Activated CD8-positive, alpha-beta T cell treated with anti-CD3 and anti-CD28 coated beads for 36 hours (primary cell): ENCODE measurements at regions of chr5 and their contacts with region 1.

Region 1: DNA sequence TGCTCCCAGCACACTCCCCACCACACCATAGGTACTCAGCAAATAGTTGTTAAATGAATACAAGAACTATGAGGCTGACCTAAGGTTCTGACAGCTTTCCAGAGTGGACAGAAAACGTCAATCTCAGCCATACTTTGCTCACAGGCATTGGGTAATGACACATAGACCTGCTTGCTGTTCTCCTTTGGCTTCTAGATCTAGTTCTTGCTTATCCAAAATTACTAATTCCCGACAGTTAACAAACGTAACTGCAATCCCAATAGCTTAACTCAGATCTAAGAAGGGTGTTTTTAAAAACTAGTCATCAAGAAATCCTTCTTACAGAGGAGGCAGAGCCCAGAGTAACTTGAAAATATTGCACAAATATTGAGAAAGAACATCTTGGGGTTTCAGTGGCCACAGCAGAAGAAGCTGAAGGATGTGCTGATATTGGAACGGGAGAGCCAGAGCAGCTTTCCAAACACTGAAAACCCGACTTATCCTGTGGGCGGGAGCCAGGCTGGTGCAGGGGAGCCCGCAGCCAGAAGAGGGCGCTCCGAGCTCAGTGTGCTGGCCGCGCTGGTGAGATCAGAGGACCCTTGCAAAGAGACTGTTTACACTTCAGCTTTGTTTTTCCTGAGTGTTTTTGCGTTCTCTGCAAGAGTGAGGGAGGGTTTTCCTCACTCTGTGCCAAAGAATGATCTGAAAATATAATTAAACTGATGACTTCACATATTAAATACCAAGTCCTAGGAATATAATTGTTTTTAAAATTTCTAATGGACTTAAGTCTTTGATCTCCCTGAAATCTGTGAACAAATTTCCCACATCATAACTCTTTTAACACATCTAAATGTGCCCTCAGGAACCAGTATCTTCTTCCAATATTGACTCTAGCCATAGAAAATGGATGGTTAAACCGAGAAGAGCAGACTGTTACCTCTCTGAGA is 30.3 kb downstream of the FGF1 start:
- DNase-seq: peak; percentile 81
- ATAC-seq: peak; percentile 93
- H3K4me3 Mint-ChIP-seq: no peak overlapping the region
- H3K27ac Mint-ChIP-seq: no peak overlapping the region
- H3K4me1 Mint-ChIP-seq: no peaks in the 10 kb centered on the region
- H3K27me3 Mint-ChIP-seq: peaks cover 12% of the 10 kb centered on the region
- CTCF ChIP-seq: peak; percentile 97

Region 2: GRCh38 chr5:142342128-142342981 is 313.2 kb before region 1 on chr5:
- CTCF ChIA-PET with region 1: no interaction called
- POLR2A ChIA-PET with region 1: no interaction called
- intact Hi-C with region 1: no loop called
- DNase-seq: no peak
- ATAC-seq: no peak
- H3K4me3 Mint-ChIP-seq: no peak overlapping the region
- H3K27ac Mint-ChIP-seq: no peak overlapping the region
- H3K4me1 Mint-ChIP-seq: no peaks in the 10 kb centered on the region
- H3K27me3 Mint-ChIP-seq: peaks cover 3% of the 10 kb centered on the region
- CTCF ChIP-seq: no peak

Region 3: DNA sequence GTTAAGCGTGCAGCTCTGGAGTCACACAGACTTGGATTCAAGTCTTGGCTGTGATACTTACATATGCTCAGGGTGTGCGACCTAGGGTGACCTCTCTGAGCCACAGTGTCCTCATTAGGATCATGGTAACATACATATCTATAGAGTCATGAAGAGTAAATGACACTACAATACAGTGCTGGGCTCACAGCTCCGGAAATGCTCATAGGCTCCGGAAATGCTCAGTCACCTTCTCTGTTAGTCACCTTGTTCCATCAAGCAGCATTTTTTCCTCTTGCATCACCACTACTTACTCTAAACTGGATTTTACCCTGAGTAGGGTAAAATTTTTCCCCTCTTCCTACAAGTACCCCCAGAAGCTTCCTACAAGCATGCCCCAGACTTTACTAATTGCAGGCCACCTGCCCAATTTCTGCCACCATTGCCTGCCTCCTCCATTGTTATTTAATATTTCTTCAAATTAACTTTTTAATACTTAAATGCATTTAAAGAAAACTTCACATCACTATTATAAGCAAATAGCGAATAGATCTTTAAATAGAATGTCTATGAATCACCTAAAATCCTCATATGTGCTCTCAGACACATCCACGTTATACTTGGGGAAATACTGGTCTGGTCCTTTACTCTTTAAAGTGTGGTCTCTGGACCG is 183.2 kb before region 1 on chr5:
- CTCF ChIA-PET with region 1: no interaction called
- POLR2A ChIA-PET with region 1: no interaction called
- intact Hi-C with region 1: no loop called
- DNase-seq: peak; percentile 74
- ATAC-seq: peak; percentile 100
- H3K4me3 Mint-ChIP-seq: no peak overlapping the region
- H3K27ac Mint-ChIP-seq: peak overlapping the region; percentile 79
- H3K4me1 Mint-ChIP-seq: peaks cover 14% of the 10 kb centered on the region
- H3K27me3 Mint-ChIP-seq: no peaks in the 10 kb centered on the region
- CTCF ChIP-seq: no peak

Region 4: GRCh38 chr5:142611154-142611553 is 44.4 kb before region 1 on chr5:
- CTCF ChIA-PET with region 1: interaction called, 36 read pairs
- POLR2A ChIA-PET with region 1: no interaction called
- intact Hi-C with region 1: no loop called
- DNase-seq: peak; percentile 87
- ATAC-seq: peak; percentile 98
- H3K4me3 Mint-ChIP-seq: no peak overlapping the region
- H3K27ac Mint-ChIP-seq: no peak overlapping the region
- H3K4me1 Mint-ChIP-seq: no peaks in the 10 kb centered on the region
- H3K27me3 Mint-ChIP-seq: peaks cover 10% of the 10 kb centered on the region
- CTCF ChIP-seq: peak; percentile 91

Region 5: DNA sequence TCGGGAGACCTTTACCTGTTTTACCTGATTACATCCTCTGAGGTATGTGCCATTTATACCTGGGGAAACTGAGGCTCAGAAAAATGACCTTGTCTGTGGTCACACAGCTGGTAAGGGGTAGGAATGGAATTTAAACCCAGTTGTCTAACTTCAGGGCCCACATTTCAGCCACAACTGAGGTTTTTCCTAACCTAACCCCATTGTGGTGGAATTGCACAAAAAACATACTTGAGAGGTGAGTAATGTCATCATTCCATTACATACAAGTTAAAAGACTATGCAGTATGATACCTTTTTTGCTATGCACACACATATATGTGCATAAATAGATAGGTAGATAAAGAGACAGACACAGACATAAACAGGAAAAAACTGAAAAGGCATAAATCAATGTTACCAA is 16.2 kb after region 1 on chr5:
- CTCF ChIA-PET with region 1: interaction called, 66 read pairs
- POLR2A ChIA-PET with region 1: interaction called, 3 read pairs
- intact Hi-C with region 1: no loop called
- DNase-seq: no peak
- ATAC-seq: no peak
- H3K4me3 Mint-ChIP-seq: no peak overlapping the region
- H3K27ac Mint-ChIP-seq: no peak overlapping the region
- H3K4me1 Mint-ChIP-seq: no peaks in the 10 kb centered on the region
- H3K27me3 Mint-ChIP-seq: no peaks in the 10 kb centered on the region
- CTCF ChIP-seq: no peak

Region 6: DNA sequence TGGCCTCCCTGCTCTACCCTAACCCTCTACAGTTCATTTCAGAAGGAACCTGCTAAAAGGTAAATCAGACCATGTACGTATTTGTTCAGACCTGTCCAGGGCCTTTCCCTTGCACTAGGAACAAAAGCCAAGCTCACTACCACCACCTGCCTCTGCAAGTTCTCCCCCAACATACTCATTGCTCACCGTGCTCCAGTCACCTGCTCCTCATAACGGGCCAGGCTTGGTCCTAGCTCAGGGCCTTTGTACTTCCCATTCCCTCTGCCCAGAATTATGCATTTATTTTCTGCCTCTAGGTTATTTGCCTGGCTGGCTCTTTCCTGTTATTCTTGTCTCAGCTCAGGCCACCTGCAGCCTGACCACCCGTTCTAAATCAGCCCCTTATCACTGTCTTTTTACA is 35.1 kb after region 1 on chr5:
- CTCF ChIA-PET with region 1: interaction called, 124 read pairs
- POLR2A ChIA-PET with region 1: no interaction called
- intact Hi-C with region 1: no loop called
- DNase-seq: no peak
- ATAC-seq: no peak
- H3K4me3 Mint-ChIP-seq: no peak overlapping the region
- H3K27ac Mint-ChIP-seq: no peak overlapping the region
- H3K4me1 Mint-ChIP-seq: no peaks in the 10 kb centered on the region
- H3K27me3 Mint-ChIP-seq: peaks cover 8% of the 10 kb centered on the region
- CTCF ChIP-seq: no peak

Region 7: GRCh38 chr5:142748568-142749249 is 93.1 kb after region 1 on chr5:
- CTCF ChIA-PET with region 1: interaction called, 12 read pairs
- POLR2A ChIA-PET with region 1: no interaction called
- intact Hi-C with region 1: no loop called
- DNase-seq: peak; percentile 74
- ATAC-seq: peak; percentile 72
- H3K4me3 Mint-ChIP-seq: no peak overlapping the region
- H3K27ac Mint-ChIP-seq: no peak overlapping the region
- H3K4me1 Mint-ChIP-seq: peaks cover 17% of the 10 kb centered on the region
- H3K27me3 Mint-ChIP-seq: no peaks in the 10 kb centered on the region
- CTCF ChIP-seq: peak; percentile 81

Region 8: GRCh38 chr5:142894749-142895148 is 239.1 kb after region 1 on chr5:
- CTCF ChIA-PET with region 1: interaction called, 10 read pairs
- POLR2A ChIA-PET with region 1: no interaction called
- intact Hi-C with region 1: loop called (anchors 5 kb)
- DNase-seq: no peak
- ATAC-seq: no peak
- H3K4me3 Mint-ChIP-seq: no peak overlapping the region
- H3K27ac Mint-ChIP-seq: no peak overlapping the region
- H3K4me1 Mint-ChIP-seq: peaks cover 2% of the 10 kb centered on the region
- H3K27me3 Mint-ChIP-seq: no peaks in the 10 kb centered on the region
- CTCF ChIP-seq: no peak